Activated CD4-positive, alpha-beta memory T cell treated with anti-CD3 and anti-CD28 coated beads for 36 hours (primary cell): ENCODE measurements at regions of chr17 and their contacts with region 1.

Region 1: GRCh38 chr17:76681222-76682137 is 29.3 kb downstream of the MXRA7 start:
- DNase-seq: peak; percentile 80
- H3K4me3 Mint-ChIP-seq: no peak overlapping the region
- H3K27ac Mint-ChIP-seq: no peak overlapping the region
- H3K4me1 Mint-ChIP-seq: peaks cover 3% of the 10 kb centered on the region
- H3K27me3 Mint-ChIP-seq: no peaks in the 10 kb centered on the region

Region 2: GRCh38 chr17:76529224-76530094 is 152.0 kb before region 1 on chr17:
- CTCF ChIA-PET with region 1: no interaction called
- POLR2A ChIA-PET with region 1: no interaction called
- intact Hi-C with region 1: no loop called
- DNase-seq: no peak
- H3K4me3 Mint-ChIP-seq: no peak overlapping the region
- H3K27ac Mint-ChIP-seq: no peak overlapping the region
- H3K4me1 Mint-ChIP-seq: peaks cover 11% of the 10 kb centered on the region
- H3K27me3 Mint-ChIP-seq: no peaks in the 10 kb centered on the region

Region 3: DNA sequence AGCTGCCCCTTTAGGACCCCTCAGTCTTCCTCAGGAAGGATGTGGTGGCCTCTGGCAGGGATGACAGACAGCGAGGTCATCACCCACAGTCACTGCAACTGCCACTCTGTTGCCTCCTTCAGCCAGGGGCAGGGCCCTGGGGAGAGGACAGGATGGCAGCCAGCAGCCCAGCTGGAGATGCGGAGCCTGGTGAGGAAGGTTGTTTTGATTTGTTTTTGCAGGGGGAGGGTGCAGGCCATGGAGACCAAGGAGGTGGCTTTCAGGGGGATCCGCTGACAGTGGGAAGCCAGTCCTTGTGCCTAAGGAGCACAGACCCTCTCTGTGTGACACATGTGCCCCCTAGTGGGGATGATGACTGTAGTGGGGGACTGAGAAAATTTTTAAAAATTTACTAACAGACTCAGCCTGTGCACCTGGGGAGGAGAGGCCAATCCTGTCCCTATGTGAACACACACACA is 134.3 kb before region 1 on chr17:
- CTCF ChIA-PET with region 1: no interaction called
- POLR2A ChIA-PET with region 1: no interaction called
- intact Hi-C with region 1: no loop called
- DNase-seq: peak; percentile 48
- H3K4me3 Mint-ChIP-seq: no peak overlapping the region
- H3K27ac Mint-ChIP-seq: no peak overlapping the region
- H3K4me1 Mint-ChIP-seq: no peaks in the 10 kb centered on the region
- H3K27me3 Mint-ChIP-seq: peaks cover 11% of the 10 kb centered on the region

Region 4: GRCh38 chr17:76671123-76671911 is 10.2 kb before region 1 on chr17:
- CTCF ChIA-PET with region 1: interaction called, 26 read pairs
- POLR2A ChIA-PET with region 1: interaction called, 9 read pairs
- intact Hi-C with region 1: no loop called
- DNase-seq: peak; percentile 100
- H3K4me3 Mint-ChIP-seq: peak overlapping the region; percentile 90
- H3K27ac Mint-ChIP-seq: peak overlapping the region; percentile 93
- H3K4me1 Mint-ChIP-seq: peaks cover 24% of the 10 kb centered on the region
- H3K27me3 Mint-ChIP-seq: no peaks in the 10 kb centered on the region

Region 5: GRCh38 chr17:76700617-76701470 is 19.4 kb after region 1 on chr17:
- CTCF ChIA-PET with region 1: interaction called, 10 read pairs
- POLR2A ChIA-PET with region 1: no interaction called
- intact Hi-C with region 1: no loop called
- DNase-seq: no peak
- H3K4me3 Mint-ChIP-seq: no peak overlapping the region
- H3K27ac Mint-ChIP-seq: no peak overlapping the region
- H3K4me1 Mint-ChIP-seq: peaks cover 3% of the 10 kb centered on the region
- H3K27me3 Mint-ChIP-seq: no peaks in the 10 kb centered on the region

Region 6: DNA sequence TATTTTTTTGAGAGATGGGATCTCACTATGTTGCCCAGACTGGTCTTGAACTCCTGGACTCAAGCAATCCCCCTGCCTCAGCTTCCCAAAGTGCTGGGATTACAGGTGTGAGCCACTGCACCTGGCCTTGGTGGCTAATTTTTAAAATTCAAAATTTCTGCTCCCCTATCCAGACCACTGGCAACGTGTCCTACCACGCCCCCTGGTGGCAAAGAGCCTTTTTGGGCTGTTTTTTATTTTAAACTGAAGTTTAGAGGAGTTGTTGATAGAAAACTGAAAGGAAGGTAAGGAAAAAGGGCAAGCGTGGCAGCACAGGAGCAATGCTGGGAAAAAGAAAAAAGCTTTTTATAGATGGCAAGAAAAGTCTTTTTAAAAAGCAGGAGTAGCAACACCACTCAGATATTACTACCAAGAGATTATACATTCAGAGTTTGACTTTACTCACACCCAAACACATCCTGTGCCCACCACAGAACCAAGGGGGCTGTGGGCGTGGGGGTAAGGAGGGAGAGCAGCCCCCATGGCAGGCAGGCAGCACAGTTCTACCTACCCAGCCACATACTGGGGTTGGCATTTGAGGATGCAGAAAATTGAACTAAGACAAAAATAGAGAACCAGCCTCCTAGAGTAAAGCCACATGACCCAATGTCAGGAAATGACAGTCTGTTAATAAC is 33.5 kb after region 1 on chr17:
- CTCF ChIA-PET with region 1: interaction called, 16 read pairs
- POLR2A ChIA-PET with region 1: no interaction called
- intact Hi-C with region 1: no loop called
- DNase-seq: peak; percentile 79
- H3K4me3 Mint-ChIP-seq: no peak overlapping the region
- H3K27ac Mint-ChIP-seq: peak overlapping the region; percentile 24
- H3K4me1 Mint-ChIP-seq: peaks cover 29% of the 10 kb centered on the region
- H3K27me3 Mint-ChIP-seq: no peaks in the 10 kb centered on the region

Region 7: DNA sequence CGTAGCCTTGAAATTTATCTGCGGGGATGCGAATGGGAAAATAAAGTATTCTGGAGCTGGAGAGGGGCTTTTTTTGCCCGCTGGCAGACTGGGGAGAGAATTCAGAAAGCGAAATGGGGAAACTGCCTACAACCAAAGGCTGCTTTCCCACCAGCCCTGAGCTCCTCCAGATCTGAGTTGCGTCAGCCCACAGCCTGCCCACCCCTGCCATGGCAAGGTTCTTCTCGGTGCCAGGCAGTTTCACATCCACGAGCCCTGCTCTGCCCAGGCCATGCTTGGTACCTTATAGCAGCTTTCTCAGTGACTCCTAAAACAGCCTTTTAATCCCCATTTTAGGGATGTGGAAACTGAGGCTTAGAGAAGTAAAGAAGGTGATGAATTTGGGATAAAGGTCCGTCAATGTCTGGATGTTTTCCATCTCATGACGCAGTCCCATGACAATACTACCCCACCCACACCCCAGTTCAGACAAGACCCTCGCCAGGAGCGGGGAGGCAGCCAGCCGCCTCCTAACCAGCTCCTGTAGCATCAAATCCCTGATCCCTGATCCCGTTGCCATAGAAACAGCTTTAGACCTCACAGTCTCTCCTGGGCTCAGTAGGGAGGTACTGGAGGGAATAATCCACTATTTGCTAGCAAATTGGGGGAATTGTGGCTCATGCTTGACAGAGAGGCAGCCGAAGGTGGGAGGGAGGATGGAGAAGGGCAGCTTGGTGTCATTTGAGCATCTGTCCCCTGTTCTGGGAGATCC is 300.2 kb after region 1 on chr17:
- CTCF ChIA-PET with region 1: no interaction called
- POLR2A ChIA-PET with region 1: no interaction called
- intact Hi-C with region 1: no loop called
- DNase-seq: no peak
- H3K4me3 Mint-ChIP-seq: no peak overlapping the region
- H3K27ac Mint-ChIP-seq: no peak overlapping the region
- H3K4me1 Mint-ChIP-seq: peaks cover 19% of the 10 kb centered on the region
- H3K27me3 Mint-ChIP-seq: no peaks in the 10 kb centered on the region